WTC11 (cell line): ENCODE measurements at regions of chr9 and their contacts with region 1.

Region 1: DNA sequence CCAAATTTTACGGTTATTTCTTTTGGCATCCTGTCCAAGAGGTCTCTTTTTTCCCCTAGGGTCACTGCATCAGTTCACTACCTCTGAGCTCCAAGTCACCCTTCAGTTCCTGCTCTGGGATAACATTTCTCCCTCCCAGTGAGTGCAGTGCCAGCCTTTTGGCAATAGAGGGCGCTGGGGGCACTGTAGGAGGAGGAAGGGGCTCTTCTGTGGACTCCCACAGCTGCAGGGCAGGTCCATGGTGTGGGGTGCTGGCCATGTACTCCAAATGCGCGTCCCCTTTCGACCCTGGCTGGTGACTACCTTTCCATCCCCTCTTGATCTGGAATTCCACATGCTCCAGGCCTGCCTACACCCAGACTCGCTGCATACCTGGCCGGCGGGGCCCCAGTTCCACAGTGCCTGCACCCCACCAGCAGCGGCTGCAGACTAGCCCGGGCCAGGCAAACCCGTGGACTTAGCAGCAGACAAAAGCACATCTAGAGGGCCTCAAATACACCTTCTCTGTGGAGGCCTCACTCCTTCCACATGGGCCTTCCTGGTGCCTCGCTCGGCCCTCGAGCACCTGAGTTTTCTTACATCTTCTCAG is 20.4 kb upstream of the NINJ1 start:
- DNase-seq: peak; percentile 91
- ATAC-seq: peak; percentile 93
- H3K4me3 Mint-ChIP-seq: no peak overlapping the region
- H3K27ac Mint-ChIP-seq: no peak overlapping the region
- H3K4me1 Mint-ChIP-seq: no peaks in the 10 kb centered on the region
- H3K27me3 Mint-ChIP-seq: peaks cover 2% of the 10 kb centered on the region; the same call in 1 of the 2 replicates
- CTCF ChIP-seq: peak; percentile 92

Region 2: DNA sequence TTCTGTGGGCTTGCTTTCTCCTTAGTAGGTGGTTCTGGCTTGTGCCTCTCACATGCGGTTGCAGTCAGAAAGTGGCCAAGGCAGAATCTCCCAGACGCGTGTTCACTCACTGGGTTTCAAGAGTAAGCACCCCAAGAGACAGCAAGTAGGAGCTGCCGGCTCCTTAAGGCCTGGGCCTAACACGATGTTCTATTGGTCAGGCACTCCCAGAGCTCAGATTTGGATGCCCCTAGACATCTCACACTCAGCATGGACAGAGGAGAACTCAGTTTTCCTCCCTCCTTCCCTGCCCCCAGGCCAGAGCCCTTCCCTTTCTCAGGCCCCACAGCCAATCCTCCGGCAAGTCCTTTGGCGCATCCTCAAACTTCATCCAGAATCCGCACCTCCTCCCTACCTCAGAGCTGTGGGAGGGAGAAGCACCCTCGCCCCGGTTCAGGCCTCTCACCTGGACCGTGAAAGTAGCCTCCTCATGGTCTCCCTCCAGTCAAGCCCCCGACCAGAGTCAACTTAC is 64.9 kb before region 1 on chr9:
- CTCF ChIA-PET with region 1: no interaction called
- POLR2A ChIA-PET with region 1: no interaction called
- DNase-seq: no peak
- ATAC-seq: no peak
- H3K4me3 Mint-ChIP-seq: no peak overlapping the region
- H3K27ac Mint-ChIP-seq: no peak overlapping the region
- H3K4me1 Mint-ChIP-seq: peaks cover 4% of the 10 kb centered on the region
- H3K27me3 Mint-ChIP-seq: no peaks in the 10 kb centered on the region; the same call in 1 of the 2 replicates
- CTCF ChIP-seq: no peak

Region 3: GRCh38 chr9:93119953-93120845 is 34.2 kb before region 1 on chr9:
- CTCF ChIA-PET with region 1: interaction called, 23 read pairs
- POLR2A ChIA-PET with region 1: no interaction called
- DNase-seq: peak; percentile 42
- ATAC-seq: peak; percentile 79
- H3K4me3 Mint-ChIP-seq: no peak overlapping the region
- H3K27ac Mint-ChIP-seq: peak overlapping the region; percentile 89; the same call in 1 of the 2 replicates
- H3K4me1 Mint-ChIP-seq: peaks cover 13% of the 10 kb centered on the region
- H3K27me3 Mint-ChIP-seq: no peaks in the 10 kb centered on the region
- CTCF ChIP-seq: no peak

Region 4: DNA sequence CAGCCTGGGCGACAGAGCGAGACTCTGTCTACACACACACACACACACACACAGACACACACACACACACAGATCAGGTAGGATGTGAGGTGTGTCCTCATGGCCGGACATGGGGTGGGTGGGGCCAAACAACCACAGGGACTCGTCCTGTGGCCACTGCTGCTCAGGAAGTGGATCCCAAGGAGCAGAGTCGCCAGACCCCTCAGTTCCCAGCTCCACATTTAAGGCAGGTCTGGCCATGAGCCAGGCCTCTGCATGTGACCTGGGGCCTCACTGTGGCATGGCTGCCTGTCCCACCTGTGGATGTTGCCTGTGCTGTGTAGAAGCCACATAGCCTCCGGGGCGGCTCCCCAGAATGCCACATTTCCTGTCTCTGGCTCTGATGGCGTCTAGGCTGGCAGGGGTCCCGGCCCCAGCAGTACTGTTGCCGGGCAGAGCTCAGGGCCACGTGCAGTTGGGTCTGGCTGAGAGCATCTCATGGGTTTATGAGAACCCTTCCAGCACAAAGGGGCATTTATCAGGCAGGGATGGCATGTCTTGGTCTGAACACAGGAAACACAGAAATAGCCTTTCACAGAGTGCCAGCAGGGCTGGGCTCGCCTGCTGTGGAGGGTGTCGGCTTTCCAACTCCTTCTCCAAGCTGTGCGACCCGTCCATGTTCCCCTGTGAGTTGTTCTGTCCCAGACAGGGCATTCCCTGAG is 10.4 kb before region 1 on chr9:
- CTCF ChIA-PET with region 1: interaction called, 67 read pairs
- POLR2A ChIA-PET with region 1: interaction called, 3 read pairs
- DNase-seq: no peak
- ATAC-seq: peak; percentile 66
- H3K4me3 Mint-ChIP-seq: no peak overlapping the region
- H3K27ac Mint-ChIP-seq: no peak overlapping the region; the same call in 1 of the 2 replicates
- H3K4me1 Mint-ChIP-seq: peaks cover 6% of the 10 kb centered on the region
- H3K27me3 Mint-ChIP-seq: no peaks in the 10 kb centered on the region
- CTCF ChIP-seq: no peak

Region 5: DNA sequence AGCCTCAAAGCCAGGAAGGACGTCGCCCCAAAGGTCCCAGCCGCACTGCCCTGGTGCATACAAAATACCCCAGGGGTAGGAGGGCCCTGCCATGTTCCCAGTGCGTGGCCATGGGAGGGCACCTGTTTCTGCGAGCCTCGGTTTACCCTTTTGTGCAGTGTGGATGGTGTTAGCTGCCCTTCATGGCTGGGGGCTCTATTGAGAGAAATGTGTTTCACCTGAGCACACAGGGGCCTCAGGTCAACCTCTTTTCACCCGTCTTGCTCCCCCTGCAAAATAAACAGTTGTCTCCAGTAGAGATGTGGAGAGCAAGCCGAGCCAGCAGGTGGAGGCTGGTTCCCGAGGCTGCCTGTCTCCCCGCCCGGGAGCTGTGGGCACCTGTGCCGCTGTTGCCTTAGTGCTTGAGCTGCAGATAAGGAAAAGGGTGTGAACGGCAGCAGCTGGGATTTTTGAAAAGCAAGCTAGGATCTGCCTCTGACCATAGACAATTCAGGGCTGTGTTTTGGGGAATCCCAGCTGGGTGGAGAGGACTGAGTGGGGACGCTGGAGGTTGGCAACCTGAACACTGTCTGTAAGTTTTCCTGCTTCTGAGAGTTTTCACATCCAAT is 38.8 kb after region 1 on chr9:
- CTCF ChIA-PET with region 1: interaction called, 29 read pairs
- POLR2A ChIA-PET with region 1: no interaction called
- DNase-seq: no peak
- ATAC-seq: no peak
- H3K4me3 Mint-ChIP-seq: no peak overlapping the region
- H3K27ac Mint-ChIP-seq: peak overlapping the region; percentile 63
- H3K4me1 Mint-ChIP-seq: peaks cover 63% of the 10 kb centered on the region
- H3K27me3 Mint-ChIP-seq: no peaks in the 10 kb centered on the region
- CTCF ChIP-seq: no peak

Region 6: GRCh38 chr9:93302551-93303257 is 148.3 kb after region 1 on chr9:
- CTCF ChIA-PET with region 1: interaction called, 30 read pairs
- POLR2A ChIA-PET with region 1: no interaction called
- DNase-seq: peak; percentile 72
- ATAC-seq: peak; percentile 40
- H3K4me3 Mint-ChIP-seq: no peak overlapping the region
- H3K27ac Mint-ChIP-seq: no peak overlapping the region
- H3K4me1 Mint-ChIP-seq: peaks cover 12% of the 10 kb centered on the region
- H3K27me3 Mint-ChIP-seq: no peaks in the 10 kb centered on the region
- CTCF ChIP-seq: peak; percentile 47